ENCODE measurements at regions of chr5 and their contacts with region 1.

Region 1: GRCh38 chr5:34870382-34870781 is 31.4 kb downstream of the TTC23L start:
- DNase-seq: no peak
- H3K4me3 ChIP-seq: no peak overlapping the region
- H3K27ac ChIP-seq: no peak overlapping the region
- H3K4me1 ChIP-seq: 0 out of 2 replicates have a peak, but pooled peaks cover 6% of the 10 kb centered on the region
- H3K27me3 ChIP-seq: no peaks in the 10 kb centered on the region
- CTCF ChIP-seq: no peak

Region 2: DNA sequence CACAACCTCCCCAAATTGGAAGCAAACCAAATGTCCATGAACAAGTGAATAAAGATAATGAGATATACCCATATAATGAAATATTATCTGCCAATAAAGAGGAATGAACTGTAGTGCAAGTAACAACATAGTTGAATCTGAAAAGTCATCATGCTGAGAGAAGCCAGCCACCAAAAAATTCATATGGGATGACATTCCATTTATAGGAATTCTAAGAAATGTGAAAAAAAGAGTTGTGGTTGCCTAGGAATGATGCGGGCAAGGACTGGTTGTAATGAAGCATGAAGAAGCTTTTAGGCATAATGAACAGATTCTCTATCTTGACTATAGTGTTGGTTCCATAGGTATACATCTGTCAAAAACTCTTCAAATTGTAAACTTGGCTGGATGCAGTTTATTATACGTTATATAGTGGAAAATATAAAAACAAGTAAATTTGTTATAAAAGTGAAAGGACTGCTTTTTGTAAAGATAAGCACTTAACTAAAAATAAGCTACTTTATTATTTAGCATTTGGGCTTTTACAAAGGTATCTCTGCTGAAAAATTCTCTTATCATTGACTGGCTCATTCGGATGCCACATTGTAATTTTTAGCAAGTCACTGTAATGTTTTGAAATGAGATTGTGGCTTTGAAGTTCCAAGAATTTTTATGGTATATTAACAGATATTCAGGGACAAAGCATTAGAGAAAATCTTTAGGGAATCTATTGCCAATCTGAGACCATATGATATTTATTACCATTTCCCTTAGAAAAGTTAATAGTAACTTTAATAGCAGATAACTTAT is 52.6 kb before region 1 on chr5:
- CTCF ChIA-PET with region 1: no interaction called
- POLR2A ChIA-PET with region 1: interaction called, 20 read pairs
- intact Hi-C with region 1: no loop called
- DNase-seq: no peak
- H3K4me3 ChIP-seq: no peak overlapping the region
- H3K27ac ChIP-seq: peak overlapping the region; percentile 7; the same call in 1 of the 2 replicates
- H3K4me1 ChIP-seq: no peaks in the 10 kb centered on the region
- H3K27me3 ChIP-seq: no peaks in the 10 kb centered on the region
- CTCF ChIP-seq: no peak

Measured in PC-9 (cell line).